A673 (cell line): ENCODE measurements at regions of chr7 and their contacts with region 1.

Region 1: GRCh38 chr7:136134503-136134902 is 157.3 kb upstream of the MTPN start:
- DNase-seq: peak; percentile 88
- H3K4me3 ChIP-seq: no peak overlapping the region
- H3K27ac ChIP-seq: peak overlapping the region; percentile 75
- H3K4me1 ChIP-seq: peaks cover 37% of the 10 kb centered on the region
- H3K27me3 ChIP-seq: no peaks in the 10 kb centered on the region
- CTCF ChIP-seq: peak; percentile 45

Region 2: GRCh38 chr7:136389933-136390332 is 255.4 kb after region 1 on chr7:
- CTCF ChIA-PET with region 1: no interaction called
- POLR2A ChIA-PET with region 1: no interaction called
- intact Hi-C with region 1: loop called (anchors 5 kb)
- DNase-seq: peak; percentile 58
- H3K4me3 ChIP-seq: no peak overlapping the region
- H3K27ac ChIP-seq: peak overlapping the region; percentile 92
- H3K4me1 ChIP-seq: peaks cover 52% of the 10 kb centered on the region
- H3K27me3 ChIP-seq: no peaks in the 10 kb centered on the region
- CTCF ChIP-seq: no peak